Activated CD8-positive, alpha-beta T cell treated with anti-CD3 and anti-CD28 coated beads for 36 hours (primary cell): ENCODE measurements at regions of chr16 and their contacts with region 1.

Region 1: DNA sequence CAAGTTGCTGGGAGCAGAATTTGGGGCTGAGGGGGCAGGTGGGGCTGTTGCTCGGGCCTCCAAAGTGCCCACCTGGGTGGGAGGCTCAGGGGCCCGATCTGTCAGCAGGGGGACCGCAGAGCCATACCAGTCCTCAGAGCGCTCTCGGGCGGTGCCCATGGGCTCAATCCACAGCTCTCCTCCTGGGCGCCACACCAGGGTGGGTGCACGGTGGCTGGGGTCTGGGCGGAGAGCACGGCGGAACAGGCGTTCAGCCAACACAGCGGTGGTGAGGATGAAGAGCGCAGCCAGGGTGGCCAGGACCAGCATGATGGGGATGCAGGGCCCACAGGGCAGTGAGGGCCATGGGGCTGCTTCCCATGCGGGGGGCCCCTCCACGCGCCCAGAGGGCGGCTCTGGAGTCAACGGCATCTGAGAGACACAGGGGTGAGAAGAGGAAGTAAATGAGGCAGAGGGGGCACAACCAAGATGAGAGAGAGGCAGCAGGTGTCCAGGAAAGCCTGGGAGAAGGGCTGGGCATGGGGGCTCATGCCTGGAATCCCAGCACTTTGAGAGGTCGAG is 1.2 kb downstream of the C16orf54 start:
- DNase-seq: peak; percentile 42
- ATAC-seq: no peak
- H3K4me3 Mint-ChIP-seq: peak overlapping the region; percentile 84
- H3K27ac Mint-ChIP-seq: peak overlapping the region; percentile 97
- H3K4me1 Mint-ChIP-seq: peaks cover 62% of the 10 kb centered on the region
- H3K27me3 Mint-ChIP-seq: no peaks in the 10 kb centered on the region
- CTCF ChIP-seq: no peak

Region 2: DNA sequence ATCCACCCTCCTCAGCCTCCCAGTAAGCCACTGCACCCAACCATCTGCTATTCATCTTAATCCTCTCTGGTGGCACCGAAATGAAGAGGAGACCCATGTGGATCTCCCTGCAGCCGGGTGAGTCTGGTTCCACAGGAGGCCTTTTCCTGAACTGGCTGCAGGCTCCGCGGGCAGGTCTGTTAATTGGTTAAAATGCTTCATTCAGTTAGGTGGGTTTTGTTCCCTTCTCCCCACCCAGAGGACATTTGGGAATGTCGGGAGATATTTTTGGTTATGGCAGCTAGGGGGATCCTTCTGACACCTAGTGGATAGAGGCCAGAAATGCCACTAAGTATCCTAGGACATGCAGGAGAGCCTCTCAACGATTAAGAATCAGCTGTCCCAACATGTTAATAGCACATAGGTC is 15.5 kb before region 1 on chr16:
- CTCF ChIA-PET with region 1: interaction called, 7 read pairs
- POLR2A ChIA-PET with region 1: interaction called, 20 read pairs
- intact Hi-C with region 1: no loop called
- DNase-seq: no peak
- ATAC-seq: no peak
- H3K4me3 Mint-ChIP-seq: no peak overlapping the region
- H3K27ac Mint-ChIP-seq: no peak overlapping the region
- H3K4me1 Mint-ChIP-seq: peaks cover 33% of the 10 kb centered on the region
- H3K27me3 Mint-ChIP-seq: no peaks in the 10 kb centered on the region
- CTCF ChIP-seq: peak; percentile 32

Region 3: GRCh38 chr16:29790183-29790952 is 45.7 kb after region 1 on chr16 and contains the start of gene KIF22:
- CTCF ChIA-PET with region 1: interaction called, 15 read pairs
- POLR2A ChIA-PET with region 1: interaction called, 7 read pairs
- intact Hi-C with region 1: loop called (anchors 5 kb)
- DNase-seq: peak; percentile 100
- ATAC-seq: peak; percentile 97
- H3K4me3 Mint-ChIP-seq: peak within 1 kb of the TSS; percentile 100
- H3K27ac Mint-ChIP-seq: peak within 1 kb of the TSS; percentile 97
- H3K4me1 Mint-ChIP-seq: peaks cover 41% of the 10 kb centered on the region
- H3K27me3 Mint-ChIP-seq: no peaks in the 10 kb centered on the region
- CTCF ChIP-seq: peak; percentile 69
- total RNA-seq, gene KIF22: 160 to 165 TPM